Gastrocnemius medialis (tissue), 4 donors: ENCODE measurements at regions of chr6 and their contacts with region 1.

Region 1: GRCh38 chr6:96897383-96898240 is at the start of gene NDUFAF4:
- DNase-seq: peak; percentile 95 to 96
- ATAC-seq: peak; percentile 92 to 95
- H3K4me3 ChIP-seq: peak within 1 kb of the TSS; percentile 83 to 98 (median 91)
- H3K27ac ChIP-seq: peak within 1 kb of the TSS; percentile 92 to 97 (median 96)
- H3K4me1 ChIP-seq: peaks cover 31 to 33% of the 10 kb centered on the region in 2 donors
- H3K27me3 ChIP-seq: no peaks in the 10 kb centered on the region
- CTCF ChIP-seq: peak; percentile 93 to 98 (median 95)
- POLR2A ChIP-seq: peak; percentile 76 to 85
- total RNA-seq, gene NDUFAF4: 31.3 to 63.9 (median 45.8) TPM

Region 2: DNA sequence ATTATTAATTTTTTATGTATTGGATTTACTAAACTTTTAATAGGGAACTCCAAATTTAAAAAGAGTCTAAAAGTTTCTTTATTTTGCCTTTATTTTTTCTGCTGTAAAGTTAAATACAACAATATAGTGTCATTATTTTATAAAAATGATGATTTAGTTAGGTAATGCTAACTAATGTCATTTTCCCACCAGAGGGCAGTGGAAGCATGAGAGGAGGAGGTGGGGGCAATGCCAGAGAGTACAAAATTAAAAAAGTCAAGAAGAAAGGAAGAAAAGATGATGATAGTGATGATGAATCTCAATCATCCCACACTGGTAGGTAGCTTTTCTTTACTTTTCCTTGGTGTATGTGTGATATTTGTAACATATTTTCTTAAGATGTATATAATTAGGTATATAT is 354.9 kb before region 1 on chr6:
- in situ Hi-C with region 1: loop called in 2 of 4 experiments (anchors 25 kb)
- intact Hi-C with region 1: no loop called
- DNase-seq: no peak
- ATAC-seq: no peak
- H3K4me3 ChIP-seq: no peak overlapping the region
- H3K27ac ChIP-seq: no peak overlapping the region
- H3K4me1 ChIP-seq: no peaks in the 10 kb centered on the region
- H3K27me3 ChIP-seq: no peaks in the 10 kb centered on the region
- CTCF ChIP-seq: peak in 2 of 5 experiments; percentile 17 to 27
- POLR2A ChIP-seq: no peak

Region 3: GRCh38 chr6:97059473-97059872 is 161.9 kb after region 1 on chr6:
- in situ Hi-C with region 1: loop called in 3 of 4 experiments (anchors 5 to 10 kb)
- intact Hi-C with region 1: loop called (anchors 1 kb)
- DNase-seq: no peak
- ATAC-seq: peak in 1 of 2 donors; percentile 61
- H3K4me3 ChIP-seq: no peak overlapping the region
- H3K27ac ChIP-seq: no peak overlapping the region
- H3K4me1 ChIP-seq: no peaks in the 10 kb centered on the region
- H3K27me3 ChIP-seq: no peaks in the 10 kb centered on the region
- CTCF ChIP-seq: peak; percentile 18 to 54 (median 25)
- POLR2A ChIP-seq: no peak

Region 4: DNA sequence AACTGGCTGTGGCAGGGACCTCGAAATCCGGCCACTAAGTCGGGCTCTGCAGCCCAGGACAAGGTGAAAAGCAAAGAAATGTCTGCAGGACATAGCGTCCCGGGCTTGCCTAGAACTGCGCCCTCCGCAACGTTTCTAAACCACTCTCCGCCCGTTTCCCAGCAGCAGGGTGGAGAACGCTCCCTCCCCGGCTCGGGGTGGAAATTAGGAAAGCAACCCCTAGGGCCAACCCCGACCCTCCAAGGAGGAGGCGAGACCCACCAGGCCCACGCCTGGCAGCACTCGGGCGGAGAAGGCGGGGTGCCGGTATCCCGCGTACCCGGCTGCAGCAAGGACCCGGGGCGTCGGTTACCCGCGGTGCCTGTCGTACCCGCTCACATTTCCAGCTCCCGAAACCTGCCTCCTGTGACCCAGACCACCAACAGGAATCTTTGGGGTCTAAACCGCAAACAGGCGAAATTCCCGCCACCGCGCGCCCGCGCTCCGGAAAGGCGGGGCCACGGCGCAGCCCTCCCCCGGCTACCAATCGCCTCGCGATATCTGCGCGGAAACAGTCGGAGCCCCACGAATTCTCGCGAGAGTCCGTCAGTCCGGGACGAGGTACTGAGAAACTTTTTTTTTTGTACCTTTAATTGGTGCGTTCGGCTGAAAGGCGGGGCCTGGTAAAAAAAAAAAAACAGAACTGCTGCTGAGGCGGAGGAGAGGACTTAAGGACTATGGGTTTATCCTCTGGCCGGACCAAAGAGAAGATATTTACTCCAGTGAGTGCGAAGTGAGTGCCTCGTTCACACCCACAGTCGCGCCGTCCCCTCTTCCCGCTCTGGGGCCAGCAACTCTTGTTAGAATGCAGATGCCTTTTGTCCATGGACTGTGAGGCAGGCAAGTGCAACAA is 385.4 kb after region 1 on chr6 and contains the start of gene MMS22L:
- in situ Hi-C with region 1: no loop called
- intact Hi-C with region 1: loop called (anchors 5 kb)
- DNase-seq: peak; percentile 78 to 87
- ATAC-seq: peak; percentile 97 to 98
- H3K4me3 ChIP-seq: peak within 1 kb of the TSS; percentile 71 to 99 (median 86)
- H3K27ac ChIP-seq: peak within 1 kb of the TSS; percentile 35 to 71 (median 54)
- H3K4me1 ChIP-seq: peaks cover 3 to 11% of the 10 kb centered on the region in 2 donors
- H3K27me3 ChIP-seq: no peaks in the 10 kb centered on the region
- CTCF ChIP-seq: no peak
- POLR2A ChIP-seq: no peak
- total RNA-seq, gene MMS22L: 0.22 to 2.7 (median 2.3) TPM